Sigmoid colon (tissue), 7 donors: ENCODE measurements at regions of chr5 and their contacts with region 1.

Region 1: DNA sequence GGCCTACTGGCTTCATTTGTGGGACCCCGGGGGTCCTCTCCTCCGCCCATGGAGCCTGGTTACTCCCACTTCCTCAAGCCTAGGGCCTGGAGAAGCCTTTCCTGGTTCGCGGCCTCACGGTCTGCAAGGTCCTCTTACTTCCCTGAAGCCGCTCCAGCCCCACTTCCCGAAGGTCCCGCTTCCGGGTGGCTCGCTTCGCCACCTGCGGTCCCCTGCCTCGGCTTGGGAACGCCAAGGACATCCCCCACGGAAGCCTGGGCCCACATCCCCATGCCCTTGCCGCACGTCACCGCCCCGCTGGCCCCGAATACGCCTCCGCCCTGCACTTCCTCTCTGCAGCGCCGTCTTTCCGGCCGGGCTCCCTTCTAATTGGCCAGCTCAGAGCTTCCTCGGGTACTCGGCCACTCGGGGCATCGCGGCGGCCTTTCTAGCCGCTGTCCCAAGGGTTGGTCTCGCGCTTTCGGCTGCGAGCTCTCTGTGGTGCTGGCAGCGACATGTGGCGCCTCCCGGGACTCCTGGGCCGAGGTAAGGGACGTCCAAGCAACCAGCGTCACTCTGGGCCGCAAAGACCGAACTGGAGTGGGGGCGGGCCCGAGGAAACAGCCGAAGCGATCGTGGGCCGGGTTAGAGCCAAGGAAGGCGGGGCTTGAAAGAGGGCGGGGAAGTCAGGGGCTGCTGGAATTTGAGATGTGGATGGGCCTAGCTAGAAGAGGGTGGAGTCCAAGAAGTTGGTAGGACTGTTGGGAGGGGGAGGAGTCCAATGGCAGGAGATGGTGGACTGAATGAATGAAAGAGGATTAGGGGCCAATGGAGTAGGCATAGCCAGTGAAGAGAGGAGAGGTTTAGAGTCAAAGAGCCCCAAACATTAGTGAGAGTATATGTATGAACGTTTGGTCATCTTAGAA is at the start of gene DELE1:
- DNase-seq: peak; percentile 97
- H3K4me3 ChIP-seq: peak within 1 kb of the TSS; percentile 61 to 70 (median 66)
- H3K27ac ChIP-seq: peak within 1 kb of the TSS; percentile 92 to 96 (median 92)
- H3K4me1 ChIP-seq: peaks cover 0 to 21% (median 15%) of the 10 kb centered on the region in 4 donors
- H3K27me3 ChIP-seq: no peaks in the 10 kb centered on the region
- CTCF ChIP-seq: no peak
- EP300 ChIP-seq: no peak
- POLR2A ChIP-seq: peak; percentile 77 to 90
- total RNA-seq, gene DELE1: 47.7 to 88.3 (median 69.1) TPM

Region 2: GRCh38 chr5:141849375-141850243 is 74.1 kb before region 1 on chr5:
- intact Hi-C with region 1: loop called (anchors 2 kb)
- DNase-seq: peak; percentile 92
- H3K4me3 ChIP-seq: peak overlapping the region; percentile 59 to 78 (median 66)
- H3K27ac ChIP-seq: peak overlapping the region; percentile 85 to 93 (median 90)
- H3K4me1 ChIP-seq: peaks cover 0 to 16% (median 11%) of the 10 kb centered on the region in 4 donors
- H3K27me3 ChIP-seq: peaks cover 0 to 7% (median 0%) of the 10 kb centered on the region in 3 donors
- CTCF ChIP-seq: peak in 3 of 4 experiments; percentile 14 to 38 (median 26)
- EP300 ChIP-seq: peak in 1 of 4 donors; percentile 3
- POLR2A ChIP-seq: peak; percentile 69 to 80

Region 3: DNA sequence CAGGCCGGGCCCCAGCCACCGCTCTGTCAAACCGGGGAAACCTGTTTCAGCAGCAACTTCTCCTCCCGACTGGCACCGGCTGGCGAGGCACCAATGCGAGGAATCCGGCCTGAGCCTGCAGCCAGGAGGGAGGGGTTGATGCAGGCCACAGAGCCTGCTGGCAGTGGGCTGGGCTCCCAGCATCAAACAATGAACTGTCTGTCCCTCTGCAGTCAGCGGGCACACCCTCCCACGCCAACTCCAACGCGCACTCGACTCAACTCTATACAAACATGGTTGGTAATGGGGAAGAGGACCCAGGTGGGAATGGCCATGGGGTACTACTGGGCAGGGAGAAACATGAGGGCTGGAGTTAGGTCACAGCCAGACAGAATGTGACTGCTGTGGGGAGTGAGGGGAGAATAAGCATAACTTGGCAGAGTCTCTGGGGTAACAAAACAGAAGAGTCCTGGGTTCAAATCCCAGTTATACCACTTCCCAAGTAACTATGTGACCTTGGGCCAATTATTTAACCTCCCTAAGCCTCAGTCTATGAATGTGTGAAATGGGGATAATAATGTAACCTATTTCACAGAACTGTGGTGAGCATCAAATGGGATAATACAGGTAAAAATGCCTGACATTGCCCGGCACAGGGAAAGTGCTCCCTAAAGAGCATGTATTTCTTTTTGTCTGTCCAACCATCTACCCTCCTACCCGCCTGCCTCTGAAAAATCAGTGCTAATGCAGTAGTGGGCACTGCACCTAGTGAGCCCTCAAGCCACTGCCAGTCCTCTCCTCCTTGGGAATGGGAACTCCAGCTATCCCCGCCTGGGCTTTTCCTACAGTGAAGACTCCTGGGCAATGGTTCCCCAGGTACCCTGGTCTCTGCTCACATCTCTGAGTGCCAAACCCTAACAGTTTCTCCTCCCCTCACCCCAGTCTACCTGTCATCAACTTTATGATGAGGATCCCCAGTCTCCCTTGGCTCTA is 57.3 kb before region 1 on chr5:
- intact Hi-C with region 1: no loop called
- DNase-seq: peak; percentile 76
- H3K4me3 ChIP-seq: no peak overlapping the region
- H3K27ac ChIP-seq: peak overlapping the region in 2 of 4 donors; percentile 2 to 39
- H3K4me1 ChIP-seq: peaks cover 0 to 3% (median 0%) of the 10 kb centered on the region in 4 donors
- H3K27me3 ChIP-seq: peaks cover 0 to 16% (median 0%) of the 10 kb centered on the region in 3 donors
- CTCF ChIP-seq: no peak
- EP300 ChIP-seq: no peak
- POLR2A ChIP-seq: no peak

Region 4: GRCh38 chr5:141968914-141969608 is 45.4 kb after region 1 on chr5 and contains the start of gene RNF14:
- intact Hi-C with region 1: loop called (anchors 5 kb)
- DNase-seq: peak; percentile 96
- H3K4me3 ChIP-seq: peak within 1 kb of the TSS; percentile 65 to 84 (median 70)
- H3K27ac ChIP-seq: peak within 1 kb of the TSS; percentile 94 to 96 (median 94)
- H3K4me1 ChIP-seq: peaks cover 0 to 29% (median 24%) of the 10 kb centered on the region in 4 donors
- H3K27me3 ChIP-seq: no peaks in the 10 kb centered on the region
- CTCF ChIP-seq: peak; percentile 86 to 96 (median 95)
- EP300 ChIP-seq: no peak
- POLR2A ChIP-seq: peak; percentile 70 to 87
- total RNA-seq, gene RNF14: 30.7 to 70.1 (median 53.5) TPM